ENCODE measurements at regions of chr7 and their contacts with region 1.

Region 1: GRCh38 chr7:106367018-106367420 is 82.2 kb upstream of the NAMPT start:
- DNase-seq: peak; percentile 59 to 83 (median 78)
- H3K4me3 ChIP-seq: no peak overlapping the region
- H3K4me3 Mint-ChIP-seq: no peak overlapping the region
- H3K27ac ChIP-seq: no peak overlapping the region
- H3K27ac Mint-ChIP-seq: peak overlapping the region; percentile 64 to 95 (median 90)
- H3K4me1 ChIP-seq: peaks cover 18 to 27% of the 10 kb centered on the region in 2 donors
- H3K4me1 Mint-ChIP-seq: peaks cover 35% of the 10 kb centered on the region
- H3K27me3 ChIP-seq: no peaks in the 10 kb centered on the region
- H3K27me3 Mint-ChIP-seq: peaks cover 0 to 3% (median 0%) of the 10 kb centered on the region in 3 donors
- CTCF ChIP-seq: peak; percentile 78

Region 2: DNA sequence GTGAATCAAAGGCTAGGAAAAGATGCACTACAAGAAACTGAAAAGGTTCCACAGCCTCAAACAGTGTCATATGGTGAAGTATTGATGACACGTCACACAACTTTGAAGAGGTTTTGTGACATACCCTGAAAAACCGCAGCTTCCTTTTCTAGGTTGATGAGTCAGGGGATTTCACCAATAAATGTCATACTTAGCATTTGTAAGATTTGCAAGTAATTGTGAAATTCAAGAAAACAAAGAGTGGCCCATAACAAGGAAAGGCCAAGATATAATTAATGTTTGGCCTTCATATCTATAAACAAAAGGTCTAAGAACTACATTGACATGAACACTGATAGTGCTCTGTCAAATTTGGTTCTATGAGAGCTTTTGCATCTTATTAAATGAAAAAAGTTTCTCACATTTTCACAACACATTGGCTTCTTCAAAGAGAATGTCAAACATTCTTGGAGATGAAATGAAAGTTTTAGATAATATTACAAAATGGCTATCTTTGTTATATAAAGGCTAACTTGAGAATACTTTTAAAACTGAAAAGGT is 20.3 kb before region 1 on chr7:
- intact Hi-C with region 1: loop called (anchors 2 kb)
- DNase-seq: peak; percentile 94 to 99 (median 98)
- H3K4me3 ChIP-seq: peak overlapping the region in 1 of 3 experiments; percentile 21
- H3K4me3 Mint-ChIP-seq: peak overlapping the region; percentile 21 to 48
- H3K27ac ChIP-seq: peak overlapping the region; percentile 59 to 97
- H3K27ac Mint-ChIP-seq: peak overlapping the region; percentile 96 to 99 (median 98)
- H3K4me1 ChIP-seq: peaks cover 40 to 43% of the 10 kb centered on the region in 2 donors
- H3K4me1 Mint-ChIP-seq: peaks cover 44% of the 10 kb centered on the region
- H3K27me3 ChIP-seq: peaks cover 0 to 4% of the 10 kb centered on the region in 2 donors
- H3K27me3 Mint-ChIP-seq: peaks cover 1 to 11% (median 2%) of the 10 kb centered on the region in 3 donors
- CTCF ChIP-seq: no peak

Region 3: GRCh38 chr7:106425017-106425719 is 58.1 kb after region 1 on chr7:
- intact Hi-C with region 1: loop called in 1 of 2 experiments (anchors 5 kb)
- DNase-seq: peak; percentile 98 to 100 (median 99)
- H3K4me3 ChIP-seq: peak overlapping the region in 2 of 3 experiments; percentile 10 to 14
- H3K4me3 Mint-ChIP-seq: peak overlapping the region; percentile 46 to 52
- H3K27ac ChIP-seq: peak overlapping the region; percentile 86 to 96
- H3K27ac Mint-ChIP-seq: peak overlapping the region; percentile 98 to 100 (median 99)
- H3K4me1 ChIP-seq: peaks cover 49 to 57% of the 10 kb centered on the region in 2 donors
- H3K4me1 Mint-ChIP-seq: peaks cover 56% of the 10 kb centered on the region
- H3K27me3 ChIP-seq: no peaks in the 10 kb centered on the region
- H3K27me3 Mint-ChIP-seq: peaks cover 0 to 2% (median 0%) of the 10 kb centered on the region in 3 donors
- CTCF ChIP-seq: no peak

Region 4: DNA sequence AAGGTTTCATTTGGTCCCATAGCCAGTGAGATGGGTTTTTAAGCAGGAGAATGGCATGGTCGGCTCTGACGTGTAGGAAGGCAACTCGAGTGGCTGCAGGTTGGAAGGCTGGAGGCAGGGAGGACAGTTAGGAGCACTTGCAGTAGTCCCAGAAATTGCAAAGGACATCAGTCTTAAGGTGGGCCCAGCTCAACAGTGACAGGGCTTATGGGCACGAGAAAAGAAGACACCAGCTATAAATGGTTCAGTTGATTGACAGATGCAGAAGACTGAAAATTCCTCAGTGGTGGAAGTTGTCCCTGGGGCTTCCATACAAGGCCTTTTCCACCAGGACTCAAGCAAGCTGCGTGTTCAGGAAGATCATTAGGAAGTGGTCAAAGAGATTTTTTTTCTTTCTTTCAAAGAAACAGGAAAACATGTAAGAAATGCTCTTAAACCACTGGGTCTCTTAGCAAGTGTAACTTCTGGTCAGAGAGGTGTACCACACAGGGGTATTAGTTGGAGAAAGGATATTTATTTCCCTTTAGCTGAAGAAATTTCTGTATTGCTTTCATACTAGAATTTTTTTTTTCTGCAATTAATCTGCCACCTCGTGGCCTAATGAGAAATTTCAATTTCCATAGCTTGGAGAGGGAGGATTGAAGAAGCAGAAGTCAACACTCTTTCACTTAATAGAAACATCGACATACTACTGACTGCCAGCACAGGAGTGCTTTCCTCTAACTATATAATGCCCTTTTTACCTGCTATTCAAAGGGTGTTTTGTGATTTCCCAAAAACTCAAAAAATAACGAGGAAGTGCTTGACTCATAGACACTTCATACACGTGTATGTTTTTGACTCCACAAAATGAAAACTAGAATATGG is 95.2 kb after region 1 on chr7:
- intact Hi-C with region 1: loop called (anchors 5 kb)
- DNase-seq: peak; percentile 53 to 70 (median 58)
- H3K4me3 ChIP-seq: no peak overlapping the region
- H3K4me3 Mint-ChIP-seq: no peak overlapping the region
- H3K27ac ChIP-seq: no peak overlapping the region
- H3K27ac Mint-ChIP-seq: peak overlapping the region in 5 of 7 donors; percentile 10 to 76 (median 58)
- H3K4me1 ChIP-seq: no peaks in the 10 kb centered on the region
- H3K4me1 Mint-ChIP-seq: peaks cover 6% of the 10 kb centered on the region
- H3K27me3 ChIP-seq: no peaks in the 10 kb centered on the region
- H3K27me3 Mint-ChIP-seq: no peaks in the 10 kb centered on the region
- CTCF ChIP-seq: peak; percentile 73